ENCODE measurements at regions of chr20 and their contacts with region 1.

Region 1: DNA sequence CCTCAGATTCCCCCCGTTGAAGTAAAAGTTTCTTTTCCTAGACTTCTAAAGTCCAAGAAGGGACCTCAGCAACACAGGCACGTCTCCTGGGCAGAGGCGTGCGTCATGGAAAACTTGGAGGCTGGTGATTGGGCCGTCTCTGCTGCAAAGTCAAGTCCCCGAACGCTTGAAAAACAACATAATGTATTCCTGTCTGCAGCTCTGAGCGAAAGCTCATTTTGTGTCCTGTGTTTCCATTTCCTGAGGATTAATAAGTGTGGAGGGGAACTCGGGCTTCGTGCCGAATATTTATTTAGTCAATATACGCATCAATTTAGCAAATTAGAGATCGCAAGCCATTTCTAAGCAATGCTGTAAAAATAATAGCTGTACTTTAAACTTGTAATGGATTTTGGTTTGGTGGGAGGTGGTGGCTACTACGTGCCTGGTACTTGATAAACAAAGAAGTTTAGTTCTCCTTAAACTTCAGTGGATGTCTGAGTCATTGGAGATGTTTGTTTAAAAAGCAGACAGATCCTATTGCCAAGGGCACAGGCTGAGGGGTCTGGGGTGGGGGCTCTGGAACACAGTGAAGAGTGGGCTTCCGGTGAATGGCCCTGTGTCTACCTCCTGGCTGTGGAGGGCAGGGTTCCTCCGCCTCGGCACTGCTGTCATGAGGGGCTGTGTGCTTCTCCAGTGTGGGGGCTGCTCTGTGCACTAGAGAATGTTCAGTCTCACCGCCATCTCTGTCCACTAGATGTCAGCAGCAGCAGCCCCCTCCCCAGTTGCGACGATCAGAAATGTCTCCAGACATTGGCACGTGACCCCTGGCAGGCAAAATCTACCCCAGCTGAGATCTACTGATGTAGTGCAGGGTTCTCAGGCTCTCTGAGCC is 21.8 kb downstream of the PCK1 start:
- DNase-seq: no peak

Region 2: DNA sequence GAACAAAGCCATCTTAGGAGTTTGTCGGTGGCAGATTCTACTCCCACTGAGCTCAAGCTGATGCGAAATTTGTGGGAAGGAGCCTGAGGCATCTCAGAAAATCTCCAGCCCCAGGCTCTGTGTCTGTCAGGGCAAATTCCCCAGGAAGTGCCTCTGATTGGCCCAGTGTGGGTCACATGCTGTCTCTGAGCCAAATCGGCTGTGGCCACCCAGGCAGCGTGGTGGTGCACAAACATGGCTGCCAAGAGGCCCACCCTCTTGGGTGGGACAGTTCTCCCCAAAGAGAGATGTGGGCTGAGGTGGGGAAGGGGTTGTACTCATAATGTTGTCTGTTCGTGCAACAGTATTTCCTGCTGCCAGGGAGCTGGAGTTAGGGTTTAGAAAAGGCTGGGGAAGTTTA is 446.8 kb before region 1 on chr20:
- intact Hi-C with region 1: loop called in 1 of 2 experiments (anchors 5 kb)
- DNase-seq: no peak

Region 3: DNA sequence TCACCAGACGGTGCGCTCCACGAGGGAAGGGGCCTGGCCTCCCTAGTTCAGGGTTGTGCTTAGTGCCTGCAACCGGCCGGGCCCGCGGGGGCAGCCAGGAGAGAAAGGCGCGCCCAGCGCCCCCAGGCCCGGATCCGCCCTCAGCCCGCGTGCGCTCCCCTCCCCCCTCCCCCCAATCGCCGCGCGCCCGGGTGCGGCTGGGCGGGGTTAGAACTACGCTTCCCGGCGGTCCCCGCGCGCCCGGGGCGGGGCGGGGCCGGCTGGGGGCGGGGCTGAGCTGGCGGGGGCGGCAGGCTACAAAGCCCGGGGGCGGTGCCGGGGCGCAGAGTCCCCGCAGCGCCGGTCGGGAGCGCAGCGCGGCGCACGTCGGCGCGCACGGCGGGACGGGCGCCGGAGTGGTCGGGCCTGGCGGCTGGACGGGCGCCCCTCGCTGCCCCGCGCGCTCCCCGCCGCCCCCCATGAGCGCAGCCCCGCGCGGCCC is 191.6 kb before region 1 on chr20 and contains the start of gene RBM38:
- intact Hi-C with region 1: loop called in 1 of 2 experiments (anchors 10 kb)
- DNase-seq: peak; percentile 90
- total RNA-seq, gene RBM38: 26.5 to 32.7 TPM

Region 4: GRCh38 chr20:57526087-57526884 is 56.4 kb before region 1 on chr20:
- intact Hi-C with region 1: loop called in 1 of 2 experiments (anchors 5 kb)
- DNase-seq: no peak

Region 5: DNA sequence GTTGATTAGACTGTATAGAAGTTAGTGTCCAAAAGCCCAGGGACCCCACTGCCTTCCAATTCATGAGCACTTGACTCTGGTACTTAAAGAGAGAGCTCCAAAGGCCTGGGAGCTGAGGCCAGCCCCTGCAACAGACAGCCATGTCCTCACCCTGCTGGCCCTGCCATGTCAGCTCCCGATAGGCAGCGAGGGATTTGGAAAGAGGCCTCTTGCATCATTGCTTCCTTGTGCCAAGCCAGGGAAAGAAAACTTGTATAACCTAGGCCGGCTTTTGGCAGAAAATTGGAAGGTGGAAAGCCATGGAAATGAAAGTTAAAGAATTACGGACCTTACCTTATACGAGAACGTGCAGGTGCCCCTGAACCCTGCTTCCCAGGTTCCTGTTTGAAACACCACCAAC is 30.2 kb before region 1 on chr20:
- intact Hi-C with region 1: loop called in 1 of 2 experiments (anchors 1 kb)
- DNase-seq: no peak

Measured in posterior vena cava (tissue), 2 donors.